Breast epithelium (tissue), 4 donors: ENCODE measurements at regions of chr12 and their contacts with region 1.

Region 1: DNA sequence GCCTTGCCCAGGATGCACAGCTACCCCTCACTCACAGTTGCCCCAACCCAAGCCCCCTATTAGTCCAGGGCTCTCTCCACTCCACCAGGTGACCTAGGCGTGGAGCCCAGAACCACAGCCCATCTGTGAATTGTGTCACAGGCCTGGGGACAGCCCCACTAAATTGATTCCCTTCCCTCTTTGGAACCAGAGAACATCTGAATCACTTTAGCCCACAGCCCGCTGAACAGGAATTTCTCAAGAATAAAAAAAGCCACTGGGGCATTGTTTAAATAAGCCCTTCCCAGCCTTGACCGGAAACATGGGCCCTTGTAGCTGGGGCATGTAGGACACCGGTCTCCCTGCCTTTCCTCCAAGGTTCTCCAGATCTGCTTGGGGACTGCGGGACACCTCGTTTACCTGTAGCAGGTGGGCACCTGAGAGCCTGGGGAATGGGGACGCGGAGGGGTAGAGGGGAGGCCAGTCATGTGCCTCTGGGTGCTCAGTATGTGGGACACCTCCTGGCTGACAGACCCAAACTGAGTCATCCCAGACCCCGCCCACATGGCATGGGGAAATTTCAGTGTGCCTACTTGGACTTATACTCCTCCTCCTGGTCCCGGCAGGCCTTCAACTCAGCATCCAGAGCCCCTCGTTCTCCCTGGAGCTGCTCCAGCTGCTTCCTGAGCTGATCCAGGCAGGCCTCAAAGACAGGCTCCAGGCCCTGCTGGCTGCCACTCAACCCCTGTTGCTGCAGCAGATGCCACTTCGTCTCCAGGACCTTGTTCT is 1.3 kb downstream of the KRT78 start:
- DNase-seq: no peak
- H3K4me3 ChIP-seq: no peak overlapping the region
- H3K27ac ChIP-seq: no peak overlapping the region
- H3K4me1 ChIP-seq: no peaks in the 10 kb centered on the region
- H3K27me3 ChIP-seq: no peaks in the 10 kb centered on the region
- CTCF ChIP-seq: no peak
- POLR2A ChIP-seq: no peak

Region 2: GRCh38 chr12:51721282-51721940 is 1126.1 kb before region 1 on chr12:
- intact Hi-C with region 1: no loop called
- DNase-seq: no peak
- H3K4me3 ChIP-seq: peak overlapping the region in 1 of 3 donors; percentile 33
- H3K27ac ChIP-seq: no peak overlapping the region
- H3K4me1 ChIP-seq: no peaks in the 10 kb centered on the region
- H3K27me3 ChIP-seq: no peaks in the 10 kb centered on the region
- CTCF ChIP-seq: no peak
- POLR2A ChIP-seq: no peak

Region 3: GRCh38 chr12:52629281-52630007 is 218.1 kb before region 1 on chr12:
- intact Hi-C with region 1: no loop called
- DNase-seq: peak in 1 of 2 donors; percentile 1
- H3K4me3 ChIP-seq: no peak overlapping the region
- H3K27ac ChIP-seq: no peak overlapping the region
- H3K4me1 ChIP-seq: no peaks in the 10 kb centered on the region
- H3K27me3 ChIP-seq: no peaks in the 10 kb centered on the region
- CTCF ChIP-seq: no peak
- POLR2A ChIP-seq: no peak

Region 4: DNA sequence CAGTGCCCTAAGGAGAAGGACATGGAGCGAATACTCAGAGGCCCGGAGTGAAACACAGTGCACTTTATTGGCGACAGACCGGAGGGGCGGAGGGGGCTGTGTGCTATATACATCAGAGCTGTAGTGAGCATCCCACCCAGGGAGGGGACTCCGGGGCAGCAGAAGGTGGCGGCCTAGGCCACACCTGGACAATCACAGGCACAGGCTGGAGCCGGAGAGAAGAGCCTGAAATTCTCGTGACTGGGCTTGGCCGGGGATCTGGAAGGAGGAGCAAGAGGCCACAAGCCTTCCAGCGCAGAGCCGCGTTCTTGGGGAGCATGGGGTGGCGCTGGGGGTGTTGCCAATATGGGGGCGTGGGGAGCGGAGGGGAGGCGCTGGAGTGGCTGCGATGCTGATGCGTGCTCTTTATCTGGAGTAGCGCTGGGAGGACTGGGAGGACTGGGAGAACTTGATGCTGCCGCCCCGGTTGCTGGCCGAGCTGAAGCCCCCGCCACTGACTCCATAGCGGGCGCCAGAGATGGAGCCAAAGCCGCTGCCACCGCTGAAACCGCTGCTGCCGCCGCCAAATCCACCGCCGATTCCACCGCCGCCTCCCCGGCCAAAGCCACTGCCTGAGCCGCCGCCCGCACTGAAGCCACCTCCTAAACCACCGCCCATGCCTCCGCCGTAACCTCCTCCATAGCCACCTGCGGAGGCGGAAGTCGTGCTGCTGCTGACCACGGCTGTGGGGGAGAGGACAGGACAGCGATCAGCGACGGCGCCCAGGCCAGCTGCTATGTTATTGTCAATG is 57.7 kb before region 1 on chr12:
- intact Hi-C with region 1: loop called (anchors 10 kb)
- DNase-seq: no peak
- H3K4me3 ChIP-seq: peak overlapping the region in 2 of 3 donors; percentile 37 to 56
- H3K27ac ChIP-seq: no peak overlapping the region
- H3K4me1 ChIP-seq: no peaks in the 10 kb centered on the region
- H3K27me3 ChIP-seq: peaks cover 0 to 8% of the 10 kb centered on the region in 2 donors
- CTCF ChIP-seq: no peak
- POLR2A ChIP-seq: no peak